ENCODE measurements at regions of chr1 and their contacts with region 1.

Region 1: GRCh38 chr1:89022167-89022959 is at the start of gene GBP3:
- DNase-seq: no peak
- H3K4me3 ChIP-seq: peak within 1 kb of the TSS; percentile 56 to 68
- H3K27ac ChIP-seq: peak within 1 kb of the TSS; percentile 82 to 83
- H3K4me1 ChIP-seq: peaks cover 0 to 10% of the 10 kb centered on the region in 2 donors
- H3K27me3 ChIP-seq: no peaks in the 10 kb centered on the region
- CTCF ChIP-seq: no peak
- total RNA-seq, gene GBP3: 28.5 TPM

Region 2: DNA sequence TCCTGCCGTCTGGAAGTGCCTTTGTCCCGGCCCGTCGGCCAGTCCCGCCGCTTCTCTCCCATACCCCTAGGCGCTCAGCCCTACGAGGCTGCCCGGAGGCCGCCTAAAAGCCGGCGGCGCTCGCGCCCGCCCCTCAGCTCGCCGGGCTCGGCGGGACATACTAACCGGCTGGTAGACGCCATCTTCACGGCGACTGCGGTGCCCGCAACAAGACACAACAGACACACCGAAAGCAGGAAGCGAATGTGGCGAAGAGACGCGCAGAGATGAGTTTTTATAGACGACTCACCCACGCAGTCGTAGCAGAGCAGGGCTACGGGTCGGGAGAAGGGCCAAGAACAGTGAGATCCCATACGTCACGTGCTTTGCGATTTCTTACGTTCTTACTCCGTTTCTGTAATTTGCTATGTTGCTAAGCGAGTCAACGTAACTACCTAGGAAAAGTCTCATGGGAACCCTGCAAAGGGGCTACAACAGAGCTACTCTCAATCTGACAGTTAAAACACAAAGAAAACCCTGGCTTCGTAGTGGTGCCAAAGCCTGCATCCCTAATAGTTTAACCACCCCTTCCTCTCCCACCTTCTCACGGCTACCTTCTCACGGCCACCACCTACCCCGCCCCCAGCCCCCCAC is 130.9 kb before region 1 on chr1 and contains the start of gene GTF2B:
- intact Hi-C with region 1: loop called (anchors 5 kb)
- DNase-seq: peak; percentile 78 to 96
- H3K4me3 ChIP-seq: peak within 1 kb of the TSS; percentile 62 to 95
- H3K27ac ChIP-seq: peak within 1 kb of the TSS; percentile 91 to 99
- H3K4me1 ChIP-seq: peaks cover 2 to 11% of the 10 kb centered on the region in 2 donors
- H3K27me3 ChIP-seq: no peaks in the 10 kb centered on the region
- CTCF ChIP-seq: peak in 1 of 3 experiments; percentile 6
- total RNA-seq, gene GTF2B: 13.7 TPM

Region 3: GRCh38 chr1:89065079-89065868 is 42.9 kb after region 1 on chr1 and contains the start of gene GBP1:
- intact Hi-C with region 1: loop called (anchors 2 kb)
- DNase-seq: no peak
- H3K4me3 ChIP-seq: peak within 1 kb of the TSS; percentile 54 to 69
- H3K27ac ChIP-seq: peak within 1 kb of the TSS; percentile 72 to 85
- H3K4me1 ChIP-seq: peaks cover 4 to 26% of the 10 kb centered on the region in 2 donors
- H3K27me3 ChIP-seq: no peaks in the 10 kb centered on the region
- CTCF ChIP-seq: no peak
- total RNA-seq, gene GBP1: 59.7 TPM